ENCODE measurements at regions of chr9 and their contacts with region 1.

Region 1: DNA sequence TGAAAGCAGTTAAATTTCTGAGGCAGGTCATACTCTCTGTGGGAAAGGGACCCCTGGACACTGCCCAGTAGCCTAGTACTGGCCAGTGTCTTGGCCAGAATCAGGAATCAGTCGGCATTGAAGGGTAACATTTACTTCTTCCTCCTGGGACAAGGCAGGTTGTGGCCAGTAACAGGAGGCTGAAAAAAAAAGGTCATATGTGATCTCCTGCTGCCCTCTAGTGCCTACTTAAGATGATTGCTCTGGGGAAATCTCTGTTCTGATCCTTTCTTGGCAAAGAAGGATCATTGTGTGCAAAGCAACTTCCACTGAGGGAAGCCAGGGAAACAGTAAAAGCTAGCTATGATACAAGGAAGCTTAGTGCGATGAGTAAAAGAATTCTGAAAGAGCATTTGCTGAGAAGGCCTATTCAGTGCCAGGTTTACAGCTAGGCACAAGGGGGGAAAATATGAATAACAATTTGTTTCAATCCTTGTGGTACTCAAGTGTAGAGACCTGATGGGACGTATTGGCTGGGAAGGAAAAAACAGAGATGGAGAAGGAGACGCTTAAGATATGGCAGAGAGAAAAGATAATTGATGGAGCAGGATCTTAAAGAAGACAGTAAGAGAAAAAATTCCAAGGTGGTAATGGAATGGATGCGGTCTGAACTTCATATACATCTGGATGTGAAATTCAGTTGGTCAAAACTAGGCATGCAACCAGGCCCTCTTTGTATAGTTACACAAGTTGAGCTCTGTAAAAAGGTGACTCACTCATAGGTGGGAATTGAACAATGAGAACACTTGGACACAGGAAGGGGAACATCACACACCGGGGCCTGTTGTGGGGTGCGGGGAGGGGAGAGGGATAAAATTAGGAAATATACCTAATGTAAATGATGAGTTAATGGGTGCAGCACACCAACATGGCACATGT is 25.8 kb upstream of the TRIM32 start:
- DNase-seq: no peak
- H3K4me3 ChIP-seq: no peak overlapping the region
- H3K27ac ChIP-seq: no peak overlapping the region
- H3K4me1 ChIP-seq: peaks cover 0 to 22% (median 1%) of the 10 kb centered on the region in 4 donors
- H3K27me3 ChIP-seq: no peaks in the 10 kb centered on the region
- CTCF ChIP-seq: peak; percentile 67 to 73 (median 69)
- EP300 ChIP-seq: no peak
- POLR2A ChIP-seq: no peak

Region 2: DNA sequence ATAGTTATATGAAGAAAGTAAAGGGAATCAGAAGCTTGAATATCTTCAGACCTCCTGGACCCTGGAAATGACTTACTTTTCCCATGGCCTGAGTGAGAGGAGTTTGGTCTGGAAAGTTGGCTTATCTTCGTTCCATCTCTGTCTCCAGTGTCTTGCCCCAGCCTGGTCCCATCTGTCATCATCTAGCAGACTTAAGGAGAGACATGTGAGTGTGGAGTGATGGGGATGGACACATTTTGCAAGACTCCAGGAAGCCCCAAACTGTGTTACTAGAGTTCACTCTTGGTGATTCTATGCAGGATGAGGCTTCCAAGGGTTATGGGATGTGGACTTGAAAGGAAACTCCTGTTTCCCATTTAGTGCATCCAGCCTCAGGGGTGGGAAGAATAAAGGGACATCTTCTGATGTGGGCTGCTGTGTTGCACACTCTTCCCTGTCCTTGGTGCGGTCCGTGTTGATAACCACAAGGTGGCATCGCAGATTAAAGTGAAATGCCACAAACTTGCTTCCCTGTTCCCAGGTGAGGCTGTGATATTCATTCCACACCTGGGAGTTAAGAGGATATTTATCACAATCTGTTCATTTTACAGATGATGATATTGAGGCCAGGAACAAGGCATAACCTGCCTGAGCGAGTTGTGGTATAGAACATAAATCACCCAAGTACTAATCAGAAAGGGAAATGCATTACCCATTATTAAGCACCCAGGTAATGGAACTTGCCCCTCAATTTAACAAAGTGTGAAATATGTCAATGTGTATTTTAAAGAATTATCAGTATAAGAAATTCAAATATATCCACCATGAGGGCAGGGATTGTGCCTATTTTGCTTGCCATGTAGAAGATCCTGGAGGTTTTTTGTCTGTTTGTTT is 777.6 kb before region 1 on chr9:
- in situ Hi-C with region 1: loop called in 1 of 4 experiments (anchors 25 kb)
- intact Hi-C with region 1: no loop called
- DNase-seq: no peak
- H3K4me3 ChIP-seq: no peak overlapping the region
- H3K27ac ChIP-seq: no peak overlapping the region
- H3K4me1 ChIP-seq: no peaks in the 10 kb centered on the region
- H3K27me3 ChIP-seq: no peaks in the 10 kb centered on the region
- CTCF ChIP-seq: peak in 4 of 5 experiments; percentile 19 to 31 (median 26)
- EP300 ChIP-seq: no peak
- POLR2A ChIP-seq: no peak

Region 3: GRCh38 chr9:115969096-115969495 is 692.2 kb before region 1 on chr9:
- in situ Hi-C with region 1: no loop called
- intact Hi-C with region 1: no loop called
- DNase-seq: no peak
- H3K4me3 ChIP-seq: no peak overlapping the region
- H3K27ac ChIP-seq: no peak overlapping the region
- H3K4me1 ChIP-seq: no peaks in the 10 kb centered on the region
- H3K27me3 ChIP-seq: no peaks in the 10 kb centered on the region
- CTCF ChIP-seq: no peak
- EP300 ChIP-seq: no peak
- POLR2A ChIP-seq: no peak

Region 4: DNA sequence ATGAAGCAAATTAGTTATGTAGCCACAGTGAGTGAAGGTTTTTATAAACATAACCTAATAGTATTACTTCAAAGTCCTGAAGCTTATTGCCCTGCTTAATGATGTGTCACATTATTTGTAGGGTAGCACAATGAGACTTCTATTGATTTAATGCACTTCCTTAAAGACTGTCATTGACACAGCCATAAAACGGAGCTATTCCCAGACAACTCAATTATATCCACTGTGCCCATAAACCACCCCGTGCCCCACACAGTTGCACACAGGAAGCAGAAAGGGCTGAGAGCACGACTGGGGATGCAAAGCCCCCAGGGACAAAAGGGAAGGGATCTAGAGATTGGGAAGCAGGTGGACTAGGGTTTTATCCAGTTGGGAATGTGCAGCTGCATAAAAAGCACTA is 62.8 kb after region 1 on chr9:
- in situ Hi-C with region 1: no loop called
- intact Hi-C with region 1: no loop called
- DNase-seq: no peak
- H3K4me3 ChIP-seq: no peak overlapping the region
- H3K27ac ChIP-seq: no peak overlapping the region
- H3K4me1 ChIP-seq: no peaks in the 10 kb centered on the region
- H3K27me3 ChIP-seq: no peaks in the 10 kb centered on the region
- CTCF ChIP-seq: no peak
- EP300 ChIP-seq: no peak
- POLR2A ChIP-seq: no peak

Region 5: GRCh38 chr9:117034862-117035261 is 373.6 kb after region 1 on chr9:
- in situ Hi-C with region 1: no loop called
- intact Hi-C with region 1: no loop called
- DNase-seq: no peak
- H3K4me3 ChIP-seq: no peak overlapping the region
- H3K27ac ChIP-seq: no peak overlapping the region
- H3K4me1 ChIP-seq: no peaks in the 10 kb centered on the region
- H3K27me3 ChIP-seq: no peaks in the 10 kb centered on the region
- CTCF ChIP-seq: no peak
- EP300 ChIP-seq: no peak
- POLR2A ChIP-seq: no peak

Region 6: DNA sequence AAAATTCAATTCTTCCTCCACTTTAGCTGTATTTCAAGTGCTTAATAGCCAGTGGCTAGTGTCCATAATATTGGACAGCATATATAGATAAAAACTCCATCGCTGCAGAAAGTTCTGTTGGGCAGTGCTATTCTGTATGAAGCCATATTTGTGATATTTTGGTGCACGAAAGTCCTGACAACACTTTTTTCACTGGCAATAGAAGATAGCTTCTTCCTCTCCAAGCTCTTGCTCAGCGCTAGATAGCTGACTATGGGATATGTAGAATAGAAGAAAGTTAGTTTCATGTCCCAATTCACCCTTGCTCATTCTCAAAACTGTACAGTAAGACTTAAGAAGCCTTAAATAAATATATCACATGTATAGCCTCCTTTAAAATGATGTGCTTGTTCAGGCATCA is 1312.8 kb after region 1 on chr9:
- in situ Hi-C with region 1: no loop called
- intact Hi-C with region 1: no loop called
- DNase-seq: no peak
- H3K4me3 ChIP-seq: no peak overlapping the region
- H3K27ac ChIP-seq: no peak overlapping the region
- H3K4me1 ChIP-seq: no peaks in the 10 kb centered on the region
- H3K27me3 ChIP-seq: peaks cover 3% of the 10 kb centered on the region
- CTCF ChIP-seq: no peak
- EP300 ChIP-seq: no peak
- POLR2A ChIP-seq: no peak